ENCODE measurements at regions of chr3 and their contacts with region 1.

Region 1: DNA sequence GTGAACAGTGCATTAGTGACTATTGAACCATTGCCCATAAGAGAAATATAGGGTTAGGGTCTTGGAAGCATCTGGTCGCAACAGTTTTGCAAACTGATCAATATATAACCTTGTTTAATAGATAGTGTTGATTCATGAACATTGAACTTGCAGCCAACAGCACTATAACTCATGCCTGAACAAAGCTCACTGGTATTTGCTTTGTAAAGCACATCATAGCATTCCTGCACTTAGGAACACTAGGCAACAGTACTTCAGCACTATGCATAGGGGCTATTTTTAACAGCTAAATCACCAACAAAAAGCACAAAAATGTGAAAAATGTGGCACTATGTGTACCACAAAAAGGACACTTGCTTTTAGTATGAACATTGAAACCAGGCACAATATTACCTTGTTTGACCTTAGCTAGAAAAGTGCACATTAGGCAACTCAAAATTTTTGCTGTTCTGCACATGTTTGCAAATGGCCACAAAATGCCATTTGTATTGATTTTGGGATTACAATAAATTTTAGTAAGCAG is 68.0 kb downstream of the OXNAD1 start:
- DNase-seq: no peak
- ATAC-seq: no peak
- H3K4me3 ChIP-seq: no peak overlapping the region
- H3K4me3 Mint-ChIP-seq: no peak overlapping the region
- H3K27ac ChIP-seq: no peak overlapping the region
- H3K27ac Mint-ChIP-seq: peak overlapping the region; percentile 82
- H3K4me1 ChIP-seq: peaks cover 17% of the 10 kb centered on the region
- H3K4me1 Mint-ChIP-seq: peaks cover 50% of the 10 kb centered on the region
- H3K27me3 ChIP-seq: no peaks in the 10 kb centered on the region
- H3K27me3 Mint-ChIP-seq: no peaks in the 10 kb centered on the region
- CTCF ChIP-seq: no peak

Region 2: DNA sequence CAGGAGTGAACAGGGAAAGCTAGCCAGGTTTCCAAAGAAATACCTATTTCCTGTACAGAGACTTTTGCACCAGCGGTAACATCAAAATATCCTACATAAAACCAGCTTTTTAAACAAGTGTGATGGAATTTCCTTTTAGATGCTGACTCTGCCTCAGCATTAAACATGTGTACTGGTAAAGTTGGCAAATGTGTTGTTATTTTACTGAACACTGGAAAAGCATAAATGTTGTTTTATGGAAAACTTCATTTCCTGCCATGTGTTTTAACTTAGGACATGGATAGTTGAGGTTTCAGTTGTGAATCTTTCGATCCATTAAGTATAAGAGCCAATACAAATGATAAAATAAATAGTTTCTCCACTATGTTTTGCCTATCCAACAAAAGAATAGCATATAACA is 52.3 kb before region 1 on chr3:
- CTCF ChIA-PET with region 1: no interaction called
- POLR2A ChIA-PET with region 1: interaction called, 3 read pairs
- intact Hi-C with region 1: loop called in 1 of 2 experiments (anchors 10 kb)
- DNase-seq: no peak
- ATAC-seq: no peak
- H3K4me3 ChIP-seq: no peak overlapping the region
- H3K4me3 Mint-ChIP-seq: no peak overlapping the region
- H3K27ac ChIP-seq: no peak overlapping the region
- H3K27ac Mint-ChIP-seq: no peak overlapping the region
- H3K4me1 ChIP-seq: peaks cover 11% of the 10 kb centered on the region
- H3K4me1 Mint-ChIP-seq: peaks cover 30% of the 10 kb centered on the region
- H3K27me3 ChIP-seq: no peaks in the 10 kb centered on the region
- H3K27me3 Mint-ChIP-seq: no peaks in the 10 kb centered on the region
- CTCF ChIP-seq: no peak

Region 3: GRCh38 chr3:16550676-16551341 is 217.8 kb after region 1 on chr3:
- CTCF ChIA-PET with region 1: no interaction called
- POLR2A ChIA-PET with region 1: interaction called, 3 read pairs
- intact Hi-C with region 1: loop called in 1 of 2 experiments (anchors 5 kb)
- DNase-seq: peak; percentile 43 to 90 (median 62)
- ATAC-seq: peak; percentile 100
- H3K4me3 ChIP-seq: no peak overlapping the region
- H3K4me3 Mint-ChIP-seq: no peak overlapping the region
- H3K27ac ChIP-seq: no peak overlapping the region
- H3K27ac Mint-ChIP-seq: peak overlapping the region; percentile 16
- H3K4me1 ChIP-seq: peaks cover 5% of the 10 kb centered on the region
- H3K4me1 Mint-ChIP-seq: no peaks in the 10 kb centered on the region
- H3K27me3 ChIP-seq: no peaks in the 10 kb centered on the region
- H3K27me3 Mint-ChIP-seq: peaks cover 4% of the 10 kb centered on the region
- CTCF ChIP-seq: peak; percentile 91

Region 4: DNA sequence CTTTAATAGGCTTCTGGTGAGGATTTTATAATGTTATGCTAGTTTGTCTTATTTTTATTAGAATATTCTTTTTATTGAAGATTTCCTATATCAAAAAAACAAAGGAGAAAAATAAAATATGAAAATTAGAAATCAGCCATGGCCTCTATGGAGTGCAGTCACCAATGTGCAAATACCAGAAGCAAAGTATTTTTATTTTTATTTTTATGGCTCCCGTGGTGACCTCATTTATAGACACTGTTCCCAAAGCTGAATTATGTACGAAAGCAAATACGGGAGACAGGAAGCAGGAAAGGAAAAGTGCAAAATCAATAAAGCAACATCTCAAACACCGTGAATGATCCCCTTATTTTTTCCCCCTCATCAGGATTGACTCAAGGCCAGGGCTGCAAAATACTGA is 237.1 kb after region 1 on chr3:
- CTCF ChIA-PET with region 1: no interaction called
- POLR2A ChIA-PET with region 1: no interaction called
- intact Hi-C with region 1: no loop called
- DNase-seq: no peak
- ATAC-seq: no peak
- H3K4me3 ChIP-seq: no peak overlapping the region
- H3K4me3 Mint-ChIP-seq: no peak overlapping the region
- H3K27ac ChIP-seq: no peak overlapping the region
- H3K27ac Mint-ChIP-seq: no peak overlapping the region
- H3K4me1 ChIP-seq: no peaks in the 10 kb centered on the region
- H3K4me1 Mint-ChIP-seq: no peaks in the 10 kb centered on the region
- H3K27me3 ChIP-seq: no peaks in the 10 kb centered on the region
- H3K27me3 Mint-ChIP-seq: no peaks in the 10 kb centered on the region
- CTCF ChIP-seq: no peak

Measured in CD4-positive, alpha-beta T cell (primary cell).